Kidney (tissue), 22 donors: ENCODE measurements at regions of chr16 and their contacts with region 1.

Region 1: GRCh38 chr16:56970934-56971767 is 9.4 kb downstream of the CETP start:
- DNase-seq: no peak
- H3K4me3 ChIP-seq: no peak overlapping the region
- H3K27ac ChIP-seq: no peak overlapping the region
- H3K4me1 ChIP-seq: peaks cover 0 to 3% (median 0%) of the 10 kb centered on the region in 3 donors
- H3K27me3 ChIP-seq: no peaks in the 10 kb centered on the region
- CTCF ChIP-seq: no peak

Region 2: GRCh38 chr16:57045694-57046381 is 74.7 kb after region 1 on chr16:
- intact Hi-C with region 1: loop called (anchors 10 kb)
- DNase-seq: peak; percentile 74 to 92 (median 86)
- H3K4me3 ChIP-seq: peak overlapping the region in 1 of 3 donors; percentile 32
- H3K27ac ChIP-seq: no peak overlapping the region
- H3K4me1 ChIP-seq: peaks cover 2 to 10% (median 8%) of the 10 kb centered on the region in 3 donors
- H3K27me3 ChIP-seq: no peaks in the 10 kb centered on the region
- CTCF ChIP-seq: peak; percentile 63